Esophagus squamous epithelium (tissue), 5 donors: ENCODE measurements at regions of chr3 and their contacts with region 1.

Region 1: DNA sequence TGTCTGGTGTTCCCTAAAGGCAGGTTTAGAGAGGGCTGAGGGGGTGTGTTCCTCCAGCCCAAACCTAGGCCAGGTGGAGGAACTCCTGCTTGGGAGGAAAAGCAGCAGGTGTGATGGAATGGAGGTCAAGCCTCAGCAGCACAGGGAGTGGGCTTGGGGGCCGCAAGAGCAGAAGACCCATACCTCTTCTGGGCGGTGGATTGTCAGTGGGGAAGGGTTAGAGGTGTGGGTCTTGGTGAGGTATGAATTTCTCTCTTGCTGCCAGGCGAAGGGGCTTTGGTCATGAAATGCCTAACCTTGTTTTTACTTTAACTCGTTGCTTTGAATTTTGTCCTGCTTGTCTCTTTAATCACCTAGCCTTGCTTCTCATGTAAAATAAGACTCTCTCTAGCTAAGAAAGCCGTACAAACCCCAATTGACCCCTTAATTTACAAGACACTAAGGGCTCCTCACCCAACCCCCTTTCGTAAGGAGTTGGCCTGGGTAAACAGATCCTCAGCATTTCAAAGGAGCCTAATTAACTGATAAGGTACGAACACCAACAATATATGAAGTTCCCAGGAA is 38.9 kb downstream of the DHX30 start:
- DNase-seq: no peak
- H3K4me3 ChIP-seq: no peak overlapping the region
- H3K27ac ChIP-seq: no peak overlapping the region
- H3K4me1 ChIP-seq: peaks cover 0 to 6% (median 0%) of the 10 kb centered on the region in 3 donors
- H3K27me3 ChIP-seq: no peaks in the 10 kb centered on the region
- CTCF ChIP-seq: no peak
- POLR2A ChIP-seq: no peak

Region 2: GRCh38 chr3:47989981-47990440 is 148.1 kb after region 1 on chr3:
- intact Hi-C with region 1: loop called (anchors 5 kb)
- DNase-seq: no peak
- H3K4me3 ChIP-seq: no peak overlapping the region
- H3K27ac ChIP-seq: peak overlapping the region in 1 of 4 donors; percentile 17
- H3K4me1 ChIP-seq: peaks cover 0 to 23% (median 0%) of the 10 kb centered on the region in 3 donors
- H3K27me3 ChIP-seq: no peaks in the 10 kb centered on the region
- CTCF ChIP-seq: peak; percentile 76 to 95 (median 90)
- POLR2A ChIP-seq: no peak

Region 3: DNA sequence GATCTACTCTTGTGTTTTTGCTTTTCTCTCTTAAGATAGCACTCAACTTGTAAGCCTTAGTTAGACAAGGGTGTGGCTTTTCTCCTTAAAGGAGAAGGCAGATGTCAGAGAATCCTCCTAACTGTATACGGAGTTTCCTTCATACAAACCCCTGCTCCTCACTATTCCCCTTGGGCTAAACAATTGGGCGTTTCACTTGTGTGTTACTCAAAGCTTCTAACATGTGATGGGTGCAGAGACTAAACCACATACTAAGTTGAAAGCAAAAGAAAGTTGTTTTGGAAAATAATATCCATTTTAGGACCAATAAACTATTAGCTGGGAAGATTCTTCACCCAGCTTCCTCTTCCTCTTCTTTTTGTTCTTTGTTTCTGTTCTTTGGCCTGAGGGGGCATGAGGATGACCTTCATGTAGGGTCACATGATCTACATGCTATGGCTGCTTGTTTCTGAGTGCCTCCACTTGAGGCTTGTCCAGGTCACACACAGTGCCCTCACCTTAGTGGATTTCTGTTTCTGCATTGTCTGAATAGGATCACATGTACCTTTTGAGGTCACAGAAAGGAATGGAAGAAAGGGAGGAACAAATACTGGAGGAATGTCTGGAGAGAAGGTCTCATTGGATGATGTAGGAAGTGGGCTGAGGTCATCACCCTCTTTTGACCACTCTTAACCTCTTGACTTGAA is 477.1 kb after region 1 on chr3:
- intact Hi-C with region 1: no loop called
- DNase-seq: no peak
- H3K4me3 ChIP-seq: no peak overlapping the region
- H3K27ac ChIP-seq: no peak overlapping the region
- H3K4me1 ChIP-seq: peaks cover 0 to 6% (median 0%) of the 10 kb centered on the region in 3 donors
- H3K27me3 ChIP-seq: peaks cover 0 to 4% (median 0%) of the 10 kb centered on the region in 4 donors
- CTCF ChIP-seq: no peak
- POLR2A ChIP-seq: no peak